ENCODE measurements at regions of chr19 and their contacts with region 1.

Region 1: DNA sequence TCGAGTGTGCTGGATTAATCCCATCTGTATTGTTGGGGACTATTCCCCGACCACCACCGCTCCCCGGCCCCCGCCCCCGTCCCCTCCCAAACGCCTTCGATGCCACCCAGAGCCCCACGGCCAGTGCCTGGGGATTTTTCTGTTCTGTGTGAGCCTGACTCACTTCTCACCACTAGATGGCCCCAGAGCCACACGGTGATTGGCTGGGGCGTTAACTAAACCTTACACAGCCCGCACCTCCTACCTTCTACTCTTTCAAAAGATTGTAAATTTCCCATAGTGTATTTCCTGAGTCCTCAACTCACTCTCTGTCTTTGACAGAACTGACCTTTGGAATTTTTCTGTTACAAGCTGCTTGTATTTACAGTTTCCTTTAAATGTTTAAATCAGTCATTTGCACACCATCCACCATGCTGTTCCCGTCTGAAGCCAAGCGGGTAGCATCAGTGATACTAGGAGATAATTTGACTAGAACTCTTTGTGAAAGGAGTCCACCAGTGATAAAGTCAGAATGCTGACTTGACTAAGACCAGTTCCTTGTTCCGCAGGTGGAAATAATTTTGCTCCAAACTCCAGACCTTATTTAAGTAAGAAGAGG is 61.4 kb downstream of the RFX2 start:
- DNase-seq: no peak
- H3K4me3 ChIP-seq: no peak overlapping the region
- CTCF ChIP-seq: peak; percentile 86

Region 2: DNA sequence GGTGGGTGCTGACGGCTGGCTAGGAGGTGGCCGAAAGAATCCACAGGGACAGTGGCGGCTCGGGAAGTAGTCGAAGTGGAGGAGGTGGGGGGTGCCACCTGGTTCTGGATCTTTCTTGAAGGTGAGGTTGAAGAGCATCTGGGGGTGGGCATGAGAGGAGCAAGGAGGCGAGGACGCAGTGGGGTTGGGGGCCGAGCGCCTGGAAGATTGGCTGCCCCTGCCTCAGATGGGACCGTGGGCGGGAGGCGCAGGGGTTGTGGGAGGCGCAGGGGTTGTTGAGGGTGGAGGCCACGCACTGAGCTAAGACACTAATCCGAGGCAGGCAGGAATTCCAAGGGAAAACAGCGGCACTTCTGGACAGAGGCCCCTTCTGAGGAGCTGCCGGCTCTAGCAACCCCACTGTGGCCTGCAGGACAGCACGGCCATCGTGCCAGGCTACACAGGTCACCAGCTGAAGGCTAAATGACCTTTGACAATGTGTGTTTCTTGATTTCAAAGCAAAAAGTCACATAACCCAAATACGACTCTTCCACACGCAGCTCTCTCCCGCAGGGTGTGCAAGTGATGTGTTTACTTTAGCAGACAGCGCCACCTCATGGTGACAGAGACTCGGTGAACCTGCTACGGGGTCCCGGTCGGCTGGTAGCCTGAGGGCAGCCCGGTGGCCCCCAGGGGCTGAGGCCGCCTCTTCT is 26.9 kb before region 1 on chr19:
- CTCF ChIA-PET with region 1: interaction called, 21 read pairs
- POLR2A ChIA-PET with region 1: no interaction called
- DNase-seq: no peak
- H3K4me3 ChIP-seq: no peak overlapping the region
- CTCF ChIP-seq: peak; percentile 78

Region 3: GRCh38 chr19:6038634-6039405 is 10.1 kb before region 1 on chr19:
- CTCF ChIA-PET with region 1: interaction called, 53 read pairs
- POLR2A ChIA-PET with region 1: no interaction called
- DNase-seq: no peak
- H3K4me3 ChIP-seq: no peak overlapping the region
- CTCF ChIP-seq: no peak

Region 4: GRCh38 chr19:6076675-6077463 is 28.0 kb after region 1 on chr19:
- CTCF ChIA-PET with region 1: interaction called, 25 read pairs
- POLR2A ChIA-PET with region 1: no interaction called
- DNase-seq: peak; percentile 85
- H3K4me3 ChIP-seq: peak overlapping the region; percentile 27
- CTCF ChIP-seq: no peak

Region 5: GRCh38 chr19:6125571-6125989 is 76.7 kb after region 1 on chr19:
- CTCF ChIA-PET with region 1: interaction called, 329 read pairs
- POLR2A ChIA-PET with region 1: interaction called, 3 read pairs
- DNase-seq: no peak
- H3K4me3 ChIP-seq: no peak overlapping the region
- CTCF ChIP-seq: peak; percentile 89

Region 6: GRCh38 chr19:6354098-6354674 is 305.3 kb after region 1 on chr19:
- CTCF ChIA-PET with region 1: interaction called, 17 read pairs
- POLR2A ChIA-PET with region 1: no interaction called
- DNase-seq: no peak
- H3K4me3 ChIP-seq: no peak overlapping the region
- CTCF ChIP-seq: peak; percentile 27

Measured in AG04449 (cell line).